Mammary epithelial cell (primary cell): ENCODE measurements at regions of chr1 and their contacts with region 1.

Region 1: GRCh38 chr1:46431691-46432090 is 37.6 kb downstream of the FAAH start:
- DNase-seq: no peak
- H3K4me3 ChIP-seq: no peak overlapping the region
- H3K27ac ChIP-seq: no peak overlapping the region
- H3K4me1 ChIP-seq: no peaks in the 10 kb centered on the region
- H3K27me3 ChIP-seq: no peaks in the 10 kb centered on the region
- CTCF ChIP-seq: peak in 1 of 2 donors; percentile 3

Region 2: DNA sequence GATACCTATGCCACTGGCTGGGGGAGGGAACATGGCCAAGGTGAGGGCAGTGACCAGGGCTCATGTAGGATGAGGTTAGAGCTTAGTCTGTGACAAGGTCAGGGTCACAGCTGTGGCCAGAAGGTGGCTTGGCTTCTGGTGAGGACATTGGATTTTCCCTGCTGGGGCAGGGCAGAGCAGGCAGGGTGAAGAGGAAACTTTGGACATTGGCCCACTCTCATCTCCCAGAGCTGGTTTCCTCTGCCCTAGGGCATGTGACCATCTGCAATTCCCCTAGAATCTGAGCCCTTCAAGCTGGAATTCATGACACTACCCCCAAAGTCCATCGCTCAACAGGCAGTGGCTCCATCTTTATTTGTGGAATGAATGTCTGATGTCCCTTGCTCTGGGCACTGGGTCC is 63.2 kb after region 1 on chr1:
- CTCF ChIA-PET with region 1: no interaction called
- dilution Hi-C with region 1: loop called (anchors 5 kb)
- in situ Hi-C with region 1: no loop called
- intact Hi-C with region 1: no loop called
- DNase-seq: no peak
- H3K4me3 ChIP-seq: no peak overlapping the region
- H3K27ac ChIP-seq: no peak overlapping the region
- H3K4me1 ChIP-seq: peaks cover 3% of the 10 kb centered on the region
- H3K27me3 ChIP-seq: peaks cover 37% of the 10 kb centered on the region
- CTCF ChIP-seq: no peak

Region 3: GRCh38 chr1:46539972-46540371 is 108.3 kb after region 1 on chr1:
- CTCF ChIA-PET with region 1: no interaction called
- dilution Hi-C with region 1: loop called (anchors 5 kb)
- in situ Hi-C with region 1: no loop called
- intact Hi-C with region 1: no loop called
- DNase-seq: peak; percentile 74
- H3K4me3 ChIP-seq: no peak overlapping the region
- H3K27ac ChIP-seq: no peak overlapping the region
- H3K4me1 ChIP-seq: peaks cover 5% of the 10 kb centered on the region
- H3K27me3 ChIP-seq: peaks cover 18% of the 10 kb centered on the region
- CTCF ChIP-seq: no peak